ENCODE measurements at regions of chr19 and their contacts with region 1.

Region 1: GRCh38 chr19:20776083-20777076 is at the start of gene ZNF66:
- DNase-seq: peak; percentile 96
- ATAC-seq: peak; percentile 98
- H3K4me3 Mint-ChIP-seq: peak within 1 kb of the TSS; percentile 98
- H3K27ac Mint-ChIP-seq: peak within 1 kb of the TSS; percentile 98
- H3K4me1 Mint-ChIP-seq: peaks cover 7% of the 10 kb centered on the region
- H3K27me3 Mint-ChIP-seq: no peaks in the 10 kb centered on the region
- total RNA-seq, gene ZNF66: 8.8 to 11.1 TPM

Region 2: GRCh38 chr19:20423381-20424197 is 352.8 kb before region 1 on chr19:
- CTCF ChIA-PET with region 1: no interaction called
- POLR2A ChIA-PET with region 1: no interaction called
- intact Hi-C with region 1: loop called in 1 of 2 experiments (anchors 1 kb)
- DNase-seq: peak; percentile 61
- ATAC-seq: no peak
- H3K4me3 Mint-ChIP-seq: peak overlapping the region; percentile 96
- H3K27ac Mint-ChIP-seq: peak overlapping the region; percentile 99
- H3K4me1 Mint-ChIP-seq: peaks cover 9% of the 10 kb centered on the region
- H3K27me3 Mint-ChIP-seq: no peaks in the 10 kb centered on the region

Region 3: DNA sequence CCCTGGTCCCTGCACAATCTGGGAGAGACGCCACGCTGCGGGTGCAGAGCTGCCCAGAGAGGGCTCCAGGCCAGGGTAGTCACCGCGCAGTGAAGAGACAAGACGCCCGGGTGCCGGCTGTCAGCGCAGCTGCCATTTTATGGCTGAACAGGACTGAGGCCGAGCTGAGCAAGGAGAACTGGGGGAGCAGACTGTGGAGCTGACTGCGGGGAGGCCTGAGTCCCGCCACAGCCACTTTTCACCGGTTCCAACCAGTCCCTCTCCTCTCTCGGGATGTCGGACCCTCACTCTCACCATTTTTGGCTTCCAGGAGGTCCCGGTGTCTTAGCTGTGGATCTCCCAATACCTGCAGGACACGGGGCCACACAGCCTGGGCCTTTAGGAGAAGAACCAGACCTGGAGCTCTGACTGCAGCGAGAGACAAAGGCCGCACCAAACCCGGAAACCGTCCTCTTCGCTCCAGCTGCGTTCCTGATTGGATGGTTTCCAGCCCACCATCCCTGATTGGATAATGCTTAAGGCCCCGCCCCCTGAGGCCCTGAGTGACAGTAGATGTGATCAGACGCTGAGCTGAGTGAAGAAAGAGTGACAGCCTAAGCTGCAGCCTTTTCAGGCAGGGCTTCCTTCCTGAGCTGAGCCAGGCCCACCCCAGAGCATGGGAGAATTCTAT is 115.1 kb before region 1 on chr19 and contains the start of gene ZNF626:
- CTCF ChIA-PET with region 1: interaction called, 5 read pairs
- POLR2A ChIA-PET with region 1: interaction called, 11 read pairs
- intact Hi-C with region 1: loop called in 1 of 2 experiments (anchors 1 kb)
- DNase-seq: peak; percentile 96
- ATAC-seq: peak; percentile 99
- H3K4me3 Mint-ChIP-seq: peak within 1 kb of the TSS; percentile 92
- H3K27ac Mint-ChIP-seq: peak within 1 kb of the TSS; percentile 95
- H3K4me1 Mint-ChIP-seq: peaks cover 33% of the 10 kb centered on the region
- H3K27me3 Mint-ChIP-seq: no peaks in the 10 kb centered on the region
- total RNA-seq, gene ZNF626: 8.0 to 13.3 TPM

Region 4: DNA sequence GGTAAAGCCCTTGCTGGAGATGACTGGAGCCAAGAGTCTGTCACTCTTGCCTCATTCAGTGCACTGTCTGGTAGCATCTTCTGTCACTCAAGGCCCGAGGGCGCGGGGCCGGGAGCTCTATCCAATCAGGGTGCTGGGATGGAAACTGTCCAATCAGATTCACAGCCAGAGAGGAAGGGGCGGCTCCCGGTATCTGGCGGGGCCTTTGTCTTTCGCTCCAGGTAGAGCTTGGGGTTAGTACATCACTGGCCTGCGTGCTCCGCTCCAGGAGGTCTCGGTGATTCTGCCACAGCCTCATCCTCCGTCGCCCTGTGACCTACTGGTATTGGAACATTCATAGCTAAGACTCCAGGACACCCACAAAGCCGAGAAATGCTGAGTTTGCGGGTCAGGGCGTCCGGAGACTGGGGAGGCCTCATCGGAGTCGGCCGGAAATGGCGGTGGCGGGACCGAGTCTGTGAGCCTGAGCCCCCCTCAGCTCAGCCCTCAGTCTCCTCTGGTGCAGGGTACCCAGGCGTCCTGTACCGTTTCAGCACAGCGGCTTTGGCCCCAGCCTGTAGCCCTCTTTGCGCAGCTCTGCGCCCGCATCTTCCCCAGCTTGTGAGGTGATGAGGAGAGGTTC is 223.5 kb after region 1 on chr19:
- CTCF ChIA-PET with region 1: no interaction called
- POLR2A ChIA-PET with region 1: interaction called, 4 read pairs
- intact Hi-C with region 1: loop called in 1 of 2 experiments (anchors 1 kb)
- DNase-seq: peak; percentile 95
- ATAC-seq: peak; percentile 100
- H3K4me3 Mint-ChIP-seq: peak overlapping the region; percentile 89
- H3K27ac Mint-ChIP-seq: peak overlapping the region; percentile 91
- H3K4me1 Mint-ChIP-seq: peaks cover 9% of the 10 kb centered on the region
- H3K27me3 Mint-ChIP-seq: no peaks in the 10 kb centered on the region

Region 5: DNA sequence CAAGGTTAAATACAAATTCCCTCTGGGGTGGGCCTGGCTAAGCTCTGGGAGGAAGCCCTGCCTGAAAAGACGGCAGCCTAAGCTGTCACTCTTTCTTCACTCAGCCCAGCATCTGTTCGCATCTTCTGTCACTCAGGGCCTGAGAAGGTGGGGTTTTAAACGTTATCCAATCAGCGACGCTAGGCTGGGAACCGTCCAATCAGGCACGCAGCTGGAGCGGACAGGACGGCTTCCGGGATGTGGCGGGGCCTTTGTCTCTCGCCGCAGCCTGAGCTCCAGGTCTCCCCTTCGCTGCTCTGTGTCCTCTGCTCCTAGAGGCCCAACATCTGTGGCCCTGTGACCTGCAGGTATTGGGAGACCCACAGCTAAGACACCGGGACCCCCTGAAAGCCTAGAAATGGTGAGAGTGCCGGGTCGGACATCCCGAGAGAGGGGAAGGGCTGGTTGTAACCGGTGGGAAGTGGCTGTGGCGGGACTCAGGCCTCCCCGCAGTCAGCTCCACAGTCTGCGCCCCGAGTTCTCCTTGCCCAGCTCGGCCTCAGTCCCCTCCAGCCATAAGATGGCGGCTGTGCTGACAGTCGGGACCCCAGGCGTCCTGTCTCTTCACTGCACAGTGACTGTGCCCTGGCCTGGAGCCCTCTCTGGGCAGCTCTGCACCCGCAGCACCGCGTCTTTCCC is 365.5 kb after region 1 on chr19 and contains the start of gene ZNF431:
- CTCF ChIA-PET with region 1: interaction called, 5 read pairs
- POLR2A ChIA-PET with region 1: interaction called, 8 read pairs
- intact Hi-C with region 1: loop called in 1 of 2 experiments (anchors 2 kb)
- DNase-seq: peak; percentile 94
- ATAC-seq: peak; percentile 99
- H3K4me3 Mint-ChIP-seq: peak within 1 kb of the TSS; percentile 95
- H3K27ac Mint-ChIP-seq: peak within 1 kb of the TSS; percentile 96
- H3K4me1 Mint-ChIP-seq: peaks cover 38% of the 10 kb centered on the region
- H3K27me3 Mint-ChIP-seq: no peaks in the 10 kb centered on the region
- total RNA-seq, gene ZNF431: 16.8 to 22.2 TPM